ENCODE measurements at regions of chr1 and their contacts with region 1.

Region 1: GRCh38 chr1:154479764-154480421 is 22.1 kb upstream of the TDRD10 start:
- DNase-seq: peak; percentile 71
- H3K4me3 Mint-ChIP-seq: no peak overlapping the region
- H3K27ac Mint-ChIP-seq: peak overlapping the region; percentile 11
- H3K4me1 Mint-ChIP-seq: peaks cover 27% of the 10 kb centered on the region
- H3K27me3 Mint-ChIP-seq: no peaks in the 10 kb centered on the region

Region 2: GRCh38 chr1:154236855-154237254 is 243.0 kb before region 1 on chr1:
- CTCF ChIA-PET with region 1: no interaction called
- POLR2A ChIA-PET with region 1: no interaction called
- intact Hi-C with region 1: no loop called
- DNase-seq: no peak
- H3K4me3 Mint-ChIP-seq: no peak overlapping the region
- H3K27ac Mint-ChIP-seq: peak overlapping the region; percentile 0
- H3K4me1 Mint-ChIP-seq: peaks cover 20% of the 10 kb centered on the region
- H3K27me3 Mint-ChIP-seq: no peaks in the 10 kb centered on the region

Region 3: GRCh38 chr1:154352581-154353459 is 127.1 kb before region 1 on chr1:
- CTCF ChIA-PET with region 1: interaction called, 7 read pairs
- POLR2A ChIA-PET with region 1: no interaction called
- intact Hi-C with region 1: loop called (anchors 1 kb)
- DNase-seq: peak; percentile 81
- H3K4me3 Mint-ChIP-seq: peak overlapping the region; percentile 72
- H3K27ac Mint-ChIP-seq: peak overlapping the region; percentile 82
- H3K4me1 Mint-ChIP-seq: peaks cover 41% of the 10 kb centered on the region
- H3K27me3 Mint-ChIP-seq: no peaks in the 10 kb centered on the region

Region 4: GRCh38 chr1:154493276-154493675 is 13.4 kb after region 1 on chr1:
- CTCF ChIA-PET with region 1: interaction called, 19 read pairs
- POLR2A ChIA-PET with region 1: no interaction called
- intact Hi-C with region 1: loop called (anchors 1 kb)
- DNase-seq: peak; percentile 24
- H3K4me3 Mint-ChIP-seq: no peak overlapping the region
- H3K27ac Mint-ChIP-seq: no peak overlapping the region
- H3K4me1 Mint-ChIP-seq: peaks cover 44% of the 10 kb centered on the region
- H3K27me3 Mint-ChIP-seq: no peaks in the 10 kb centered on the region

Region 5: DNA sequence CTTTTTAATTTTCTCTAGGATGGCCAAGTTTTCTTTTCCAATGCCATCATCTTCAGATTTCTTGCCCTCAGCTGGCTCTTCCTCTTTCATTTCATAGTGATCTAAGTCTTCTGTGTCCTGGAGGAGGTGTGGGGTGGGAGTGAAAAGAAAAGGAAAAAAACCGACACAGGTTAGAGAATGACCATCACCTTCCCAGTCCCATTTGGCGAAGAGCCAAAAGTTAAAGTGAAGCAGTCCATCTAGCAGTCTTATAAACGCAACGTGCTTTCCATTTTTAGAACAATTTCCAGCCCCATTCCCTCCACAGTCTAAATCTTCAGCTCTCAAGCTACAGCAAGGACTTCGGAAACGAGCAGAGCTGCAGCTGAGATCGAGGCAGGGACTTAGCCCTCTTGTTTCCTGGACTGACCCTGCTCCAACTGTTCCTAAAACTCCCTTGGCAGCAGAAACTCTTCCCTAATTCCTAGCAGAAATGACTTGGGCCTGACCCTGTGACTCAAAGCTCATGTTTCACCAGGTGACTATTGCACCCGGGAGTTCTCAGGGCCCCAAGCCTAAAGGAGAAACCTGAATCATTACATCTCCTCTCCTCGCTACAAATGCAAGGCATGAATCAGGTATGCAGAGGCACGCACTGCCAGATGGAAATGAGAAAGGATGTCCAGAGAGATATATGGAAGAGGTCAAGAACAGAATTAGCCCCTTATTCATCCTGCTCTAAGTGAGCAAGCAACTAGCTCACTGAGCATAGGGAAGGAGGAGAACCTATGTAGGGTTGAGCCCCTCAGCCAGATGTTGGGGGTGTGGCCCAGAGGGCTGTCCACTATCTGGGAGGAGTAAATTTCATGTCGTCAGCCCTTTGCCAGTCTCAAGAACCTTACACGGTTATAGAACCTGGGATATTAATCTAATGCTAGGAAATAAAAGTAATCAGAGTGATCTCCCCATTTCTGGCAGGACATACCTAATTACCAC is 73.5 kb after region 1 on chr1:
- CTCF ChIA-PET with region 1: interaction called, 201 read pairs
- POLR2A ChIA-PET with region 1: no interaction called
- intact Hi-C with region 1: no loop called
- DNase-seq: no peak
- H3K4me3 Mint-ChIP-seq: no peak overlapping the region
- H3K27ac Mint-ChIP-seq: no peak overlapping the region
- H3K4me1 Mint-ChIP-seq: peaks cover 39% of the 10 kb centered on the region
- H3K27me3 Mint-ChIP-seq: no peaks in the 10 kb centered on the region

Region 6: GRCh38 chr1:154863315-154864174 is 383.7 kb after region 1 on chr1:
- CTCF ChIA-PET with region 1: no interaction called
- POLR2A ChIA-PET with region 1: no interaction called
- intact Hi-C with region 1: loop called (anchors 10 kb)
- DNase-seq: peak; percentile 74
- H3K4me3 Mint-ChIP-seq: no peak overlapping the region
- H3K27ac Mint-ChIP-seq: peak overlapping the region; percentile 76
- H3K4me1 Mint-ChIP-seq: peaks cover 38% of the 10 kb centered on the region
- H3K27me3 Mint-ChIP-seq: peaks cover 29% of the 10 kb centered on the region

Measured in activated CD4-positive, alpha-beta memory T cell treated with anti-CD3 and anti-CD28 coated beads for 36 hours (primary cell).